ENCODE measurements at regions of chr13 and their contacts with region 1.

Region 1: GRCh38 chr13:65656740-65657329 is 1573.3 kb downstream of the PCDH9 start:
- DNase-seq: no peak
- ATAC-seq: no peak
- H3K4me3 ChIP-seq: no peak overlapping the region
- H3K27ac ChIP-seq: no peak overlapping the region
- H3K4me1 ChIP-seq: no peaks in the 10 kb centered on the region
- H3K27me3 ChIP-seq: no peaks in the 10 kb centered on the region

Region 2: GRCh38 chr13:67224148-67224846 is 1567.5 kb after region 1 on chr13:
- intact Hi-C with region 1: loop called (anchors 5 to 10 kb)
- DNase-seq: peak; percentile 70 to 90
- ATAC-seq: peak; percentile 81
- H3K4me3 ChIP-seq: no peak overlapping the region
- H3K27ac ChIP-seq: no peak overlapping the region
- H3K4me1 ChIP-seq: peaks cover 0 to 3% of the 10 kb centered on the region in 2 donors
- H3K27me3 ChIP-seq: no peaks in the 10 kb centered on the region

Region 3: GRCh38 chr13:67229481-67230403 is 1572.9 kb after region 1 on chr13 and contains the start of gene PCDH9:
- intact Hi-C with region 1: loop called (anchors 5 to 10 kb)
- DNase-seq: no peak
- ATAC-seq: peak; percentile 2
- H3K4me3 ChIP-seq: peak within 1 kb of the TSS; percentile 68 to 91
- H3K27ac ChIP-seq: peak within 1 kb of the TSS; percentile 28 to 81
- H3K4me1 ChIP-seq: peaks cover 0 to 6% of the 10 kb centered on the region in 2 donors
- H3K27me3 ChIP-seq: no peaks in the 10 kb centered on the region
- total RNA-seq, gene PCDH9: 6.0 to 6.3 TPM

Measured in aorta (tissue), 5 donors.